Right ventricle myocardium superior (tissue), 1 donor: ENCODE measurements at regions of chr15 and their contacts with region 1.

Region 1: DNA sequence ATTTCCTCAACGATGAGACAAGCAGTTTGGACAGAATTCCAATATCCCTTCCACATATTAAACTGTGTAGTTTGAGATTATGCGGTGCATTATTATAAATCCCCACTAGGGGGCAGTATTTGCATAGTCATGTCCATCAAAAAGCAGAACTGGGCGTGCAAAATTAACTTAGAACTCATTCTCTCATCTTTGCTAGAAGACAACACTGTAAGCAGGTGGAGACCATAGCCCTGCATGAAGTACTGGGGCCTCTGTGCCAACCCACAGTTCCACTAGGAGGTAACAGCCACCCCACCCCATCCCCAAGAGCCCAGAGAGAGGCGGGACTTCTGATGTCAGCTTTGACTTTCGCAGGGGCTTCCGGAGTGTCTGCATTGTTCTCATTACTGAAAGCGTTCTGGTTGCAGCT is 106.6 kb upstream of the TMC3 start:
- DNase-seq: no peak
- ATAC-seq: peak; percentile 87

Region 2: GRCh38 chr15:81410318-81410753 is 70.3 kb before region 1 on chr15:
- intact Hi-C with region 1: no loop called
- DNase-seq: peak; percentile 55
- ATAC-seq: peak; percentile 93

Region 3: GRCh38 chr15:81939604-81940440 is 459.2 kb after region 1 on chr15:
- intact Hi-C with region 1: loop called (anchors 10 kb)
- DNase-seq: no peak
- ATAC-seq: no peak

Region 4: GRCh38 chr15:82046666-82047452 is 566.2 kb after region 1 on chr15:
- intact Hi-C with region 1: loop called (anchors 5 kb)
- DNase-seq: peak; percentile 95
- ATAC-seq: peak; percentile 85